Psoas muscle (tissue), 8 donors: ENCODE measurements at regions of chr1 and their contacts with region 1.

Region 1: DNA sequence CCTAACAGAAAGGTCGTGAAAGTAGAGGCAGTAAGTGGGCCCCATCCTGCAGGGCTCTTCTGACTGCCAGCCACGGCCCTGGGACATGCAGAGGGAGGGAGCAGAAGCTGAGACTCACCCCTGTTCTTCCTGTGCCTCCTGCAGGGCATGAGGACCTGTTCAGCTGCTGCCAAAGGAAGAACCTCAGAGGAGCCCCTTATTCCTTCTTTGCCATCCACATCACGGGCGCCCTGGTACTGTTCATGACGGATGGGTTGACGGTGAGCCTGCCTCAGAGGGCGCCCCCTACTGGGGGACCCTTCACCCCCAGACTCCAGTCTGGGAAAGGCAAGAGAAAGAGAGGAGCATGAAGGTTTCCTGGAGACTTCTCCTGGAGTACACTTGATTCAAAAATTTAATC is 47.1 kb downstream of the ELK4 start:
- DNase-seq: peak in 1 of 2 donors; percentile 15
- ATAC-seq: no peak
- H3K4me3 ChIP-seq: no peak overlapping the region
- H3K27ac ChIP-seq: no peak overlapping the region
- H3K4me1 ChIP-seq: peaks cover 4% of the 10 kb centered on the region
- H3K27me3 ChIP-seq: peaks cover 0 to 1% (median 0%) of the 10 kb centered on the region in 3 donors
- CTCF ChIP-seq: peak; percentile 13

Region 2: GRCh38 chr1:205536759-205537361 is 47.9 kb before region 1 on chr1:
- intact Hi-C with region 1: loop called in 1 of 2 experiments (anchors 5 kb)
- DNase-seq: peak; percentile 1 to 10
- ATAC-seq: peak in 2 of 4 donors; percentile 34 to 49
- H3K4me3 ChIP-seq: no peak overlapping the region
- H3K27ac ChIP-seq: no peak overlapping the region
- H3K4me1 ChIP-seq: no peaks in the 10 kb centered on the region
- H3K27me3 ChIP-seq: peaks cover 0 to 11% (median 0%) of the 10 kb centered on the region in 3 donors
- CTCF ChIP-seq: no peak